CD14-positive monocyte (primary cell): ENCODE measurements at regions of chr2 and their contacts with region 1.

Region 1: DNA sequence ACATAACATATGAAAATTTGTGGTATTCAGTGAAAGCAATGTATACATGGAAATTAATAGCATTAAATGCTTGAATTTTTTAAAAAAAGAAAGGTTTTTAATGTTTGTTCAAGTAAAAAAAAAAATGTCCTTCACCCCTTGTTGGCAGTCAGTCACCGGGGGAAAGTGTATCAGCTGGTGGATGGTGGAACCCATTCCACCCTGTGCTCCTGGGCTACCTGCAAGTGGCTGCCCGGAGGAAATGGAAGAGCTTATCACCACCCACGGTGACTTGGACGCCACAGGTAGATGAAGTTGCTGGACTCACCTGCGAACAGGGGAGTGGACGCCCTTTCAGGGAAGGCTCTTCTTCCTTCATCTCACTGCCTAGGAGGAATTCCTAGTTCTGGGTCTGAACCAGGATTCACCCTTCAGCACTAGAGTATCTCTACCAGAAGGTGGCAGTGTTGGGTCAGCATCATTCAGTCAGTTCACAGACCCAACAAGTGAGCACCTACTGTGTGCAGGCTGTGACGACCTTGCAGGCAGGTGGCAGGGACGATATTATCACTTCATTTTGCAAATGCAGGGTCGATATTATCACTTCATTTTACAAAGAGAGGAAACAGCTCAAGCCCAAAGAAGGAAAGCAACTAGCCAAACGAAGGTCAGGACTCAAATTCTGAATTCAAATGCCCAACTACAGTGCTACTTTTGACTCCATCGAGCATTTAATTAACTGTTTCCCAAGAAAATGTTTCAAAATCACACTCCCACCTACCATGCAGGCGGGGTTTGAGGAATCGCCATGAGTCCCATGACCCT is 35.8 kb downstream of the CIB4 start:
- DNase-seq: peak; percentile 29 to 56 (median 39)
- H3K4me3 ChIP-seq: no peak overlapping the region
- H3K4me3 Mint-ChIP-seq: peak overlapping the region in 1 of 2 donors; percentile 28
- H3K27ac ChIP-seq: no peak overlapping the region
- H3K27ac Mint-ChIP-seq: peak overlapping the region in 1 of 7 donors; percentile 31
- H3K4me1 ChIP-seq: no peaks in the 10 kb centered on the region
- H3K4me1 Mint-ChIP-seq: no peaks in the 10 kb centered on the region
- H3K27me3 ChIP-seq: no peaks in the 10 kb centered on the region
- H3K27me3 Mint-ChIP-seq: peaks cover 7 to 26% (median 14%) of the 10 kb centered on the region in 3 donors
- CTCF ChIP-seq: peak; percentile 90

Region 2: DNA sequence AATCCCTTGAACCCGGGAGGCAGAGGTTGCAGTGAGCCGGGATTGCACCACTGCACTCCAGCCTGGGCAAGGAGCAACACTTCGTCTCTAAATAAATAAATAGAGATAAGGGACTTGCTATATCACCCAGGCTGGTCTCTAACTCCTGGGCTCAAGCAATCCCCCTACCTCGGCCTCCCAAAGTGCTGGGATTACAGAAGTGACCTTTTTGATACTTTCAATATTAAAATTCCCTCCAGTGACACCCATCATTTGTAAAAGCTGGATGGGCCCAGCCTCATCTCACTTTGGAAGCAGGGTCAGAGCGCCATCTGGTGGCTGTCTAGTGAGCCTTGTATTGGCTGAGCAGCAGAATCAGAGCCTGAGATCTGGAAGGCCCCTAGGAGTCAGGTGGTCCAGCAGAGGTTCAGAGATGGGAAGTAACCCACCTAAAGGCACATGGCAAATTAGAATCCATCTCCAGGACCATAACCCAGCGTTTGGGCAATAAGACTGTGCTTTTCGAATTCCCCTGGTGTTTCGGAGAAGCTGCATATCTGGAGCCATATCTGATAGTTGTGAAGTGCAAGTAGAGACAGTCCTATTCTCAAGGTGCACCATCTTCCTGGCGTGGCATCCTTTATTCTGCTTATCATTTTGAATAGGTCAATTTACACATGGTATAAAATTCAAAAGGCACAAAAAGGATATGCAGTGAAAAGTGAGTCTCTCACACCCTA is 140.4 kb after region 1 on chr2:
- intact Hi-C with region 1: loop called (anchors 1 to 2 kb)
- DNase-seq: peak; percentile 56 to 68 (median 65)
- H3K4me3 ChIP-seq: no peak overlapping the region
- H3K4me3 Mint-ChIP-seq: no peak overlapping the region
- H3K27ac ChIP-seq: no peak overlapping the region
- H3K27ac Mint-ChIP-seq: no peak overlapping the region
- H3K4me1 ChIP-seq: no peaks in the 10 kb centered on the region
- H3K4me1 Mint-ChIP-seq: peaks cover 4% of the 10 kb centered on the region
- H3K27me3 ChIP-seq: no peaks in the 10 kb centered on the region
- H3K27me3 Mint-ChIP-seq: peaks cover 1 to 10% (median 7%) of the 10 kb centered on the region in 3 donors
- CTCF ChIP-seq: peak; percentile 90